Lower leg skin (tissue), 4 donors: ENCODE measurements at regions of chr1 and their contacts with region 1.

Region 1: DNA sequence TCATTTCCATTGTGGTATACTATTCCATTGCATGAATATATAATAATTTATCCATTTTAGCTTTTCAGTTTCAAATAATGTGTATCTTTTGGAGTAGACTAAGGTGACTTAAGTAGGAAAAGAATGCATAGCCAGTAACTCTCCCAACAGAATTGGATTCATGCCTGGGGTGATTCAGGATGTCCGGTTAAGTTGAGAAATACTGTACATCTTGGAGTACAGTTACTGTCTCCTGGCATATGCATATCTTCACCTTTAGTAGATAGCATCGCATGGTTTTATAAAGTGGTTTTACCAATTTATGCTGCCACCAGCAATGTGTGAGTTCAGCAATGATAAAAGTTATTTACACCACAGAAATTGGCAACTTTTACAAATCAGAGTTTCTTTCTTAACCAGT is 18.6 kb upstream of the SLC6A9 start:
- DNase-seq: no peak
- H3K4me3 ChIP-seq: no peak overlapping the region
- CTCF ChIP-seq: no peak
- POLR2A ChIP-seq: no peak

Region 2: GRCh38 chr1:44008259-44008658 is 41.6 kb before region 1 on chr1:
- intact Hi-C with region 1: loop called (anchors 5 kb)
- DNase-seq: no peak
- H3K4me3 ChIP-seq: no peak overlapping the region
- CTCF ChIP-seq: no peak
- POLR2A ChIP-seq: no peak

Region 3: DNA sequence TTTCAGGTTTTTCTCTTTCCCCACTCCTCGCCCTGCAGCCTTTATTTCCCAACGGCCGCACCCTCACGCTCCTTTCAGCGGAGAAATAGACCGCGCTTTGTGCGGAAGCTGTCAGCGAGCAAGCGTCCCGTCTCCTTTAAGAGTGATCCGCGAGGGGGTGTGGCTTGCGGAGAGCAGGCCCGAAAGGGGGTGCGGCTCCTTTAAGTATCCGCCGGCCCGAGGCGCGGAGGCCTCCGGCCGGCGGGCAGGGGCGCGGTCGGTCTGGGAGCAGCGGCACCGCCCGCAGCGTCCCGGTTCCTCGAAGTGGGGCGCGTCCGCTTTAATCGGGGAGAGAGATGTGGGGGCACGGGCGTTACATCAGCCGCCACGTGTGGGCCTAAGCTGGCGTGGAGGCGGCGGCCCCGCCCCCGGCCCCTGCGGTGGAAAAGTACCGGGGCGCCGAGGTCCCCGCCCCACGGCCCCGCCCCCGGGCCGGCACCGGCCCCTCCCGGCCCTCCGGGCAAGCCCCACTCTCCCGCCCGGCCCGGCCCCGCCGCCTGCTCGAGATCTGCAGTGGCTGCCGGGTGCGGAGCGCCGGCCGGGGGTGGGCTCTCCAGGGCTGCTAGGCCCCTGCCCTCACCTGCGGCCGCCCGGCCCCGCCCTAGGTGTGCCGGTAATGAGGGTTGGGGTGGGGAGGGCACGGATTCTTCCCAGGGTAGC is 19.8 kb before region 1 on chr1:
- intact Hi-C with region 1: no loop called
- DNase-seq: peak; percentile 85 to 96
- H3K4me3 ChIP-seq: peak overlapping the region; percentile 64
- CTCF ChIP-seq: no peak
- POLR2A ChIP-seq: no peak